ENCODE measurements at regions of chrX and their contacts with region 1.

Region 1: DNA sequence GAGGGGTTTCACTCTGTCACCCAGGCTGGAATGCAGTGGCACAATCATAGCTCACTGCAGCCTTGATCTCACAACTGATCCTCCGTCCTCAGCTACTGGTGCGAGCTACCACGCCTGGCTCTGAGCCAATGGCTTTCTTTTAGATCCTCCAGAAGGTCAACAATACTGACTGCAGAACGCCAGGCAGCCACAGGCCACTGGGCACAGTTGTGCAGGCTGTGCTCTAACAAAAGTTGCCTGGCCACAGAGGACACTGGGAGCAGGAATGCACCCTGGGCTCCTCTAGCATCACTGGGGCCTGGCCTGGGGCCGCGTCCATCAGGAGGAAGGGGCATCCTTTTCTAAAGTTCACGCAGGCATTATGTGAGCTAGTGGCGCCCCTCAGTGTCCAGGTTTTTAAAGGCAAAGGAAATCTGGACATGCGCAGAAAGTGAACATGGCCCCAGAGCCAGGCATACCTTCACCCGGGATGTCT is 14.9 kb upstream of the PORCN start:
- DNase-seq: no peak
- CTCF ChIP-seq: peak; percentile 7

Region 2: GRCh38 chrX:48083212-48083611 is 410.7 kb before region 1 on chrX:
- CTCF ChIA-PET with region 1: interaction called, 18 read pairs
- POLR2A ChIA-PET with region 1: no interaction called
- DNase-seq: peak; percentile 54
- CTCF ChIP-seq: peak; percentile 12

Region 3: GRCh38 chrX:48508400-48509244 is 14.7 kb after region 1 on chrX and contains the start of gene PORCN:
- CTCF ChIA-PET with region 1: no interaction called
- POLR2A ChIA-PET with region 1: no interaction called
- DNase-seq: peak; percentile 91
- CTCF ChIP-seq: no peak

Region 4: DNA sequence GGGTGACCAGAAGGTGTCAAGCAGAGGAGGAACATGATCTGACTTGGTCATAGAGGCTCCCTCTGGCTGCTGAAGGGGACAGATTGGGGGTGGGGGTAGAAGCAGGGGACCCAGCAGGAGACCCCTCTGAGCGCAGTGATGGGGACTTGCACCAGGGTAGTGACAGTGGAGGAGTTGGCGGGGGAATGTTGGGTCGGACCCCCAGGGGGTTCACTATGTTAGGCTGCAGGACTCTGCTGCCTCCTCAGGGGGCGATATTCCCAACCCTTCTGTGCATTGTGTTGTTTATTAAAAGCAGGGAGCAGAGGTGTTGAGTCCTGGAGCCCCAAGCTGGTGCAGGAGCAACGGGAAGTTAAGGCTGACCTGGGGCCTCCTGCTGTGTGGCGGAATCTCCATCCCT is 112.2 kb after region 1 on chrX:
- CTCF ChIA-PET with region 1: no interaction called
- POLR2A ChIA-PET with region 1: no interaction called
- DNase-seq: no peak
- CTCF ChIP-seq: no peak

Region 5: GRCh38 chrX:48616576-48616975 is 122.6 kb after region 1 on chrX:
- CTCF ChIA-PET with region 1: no interaction called
- POLR2A ChIA-PET with region 1: no interaction called
- DNase-seq: no peak
- CTCF ChIP-seq: no peak